IMR-90 (cell line): ENCODE measurements at regions of chr5 and their contacts with region 1.

Region 1: DNA sequence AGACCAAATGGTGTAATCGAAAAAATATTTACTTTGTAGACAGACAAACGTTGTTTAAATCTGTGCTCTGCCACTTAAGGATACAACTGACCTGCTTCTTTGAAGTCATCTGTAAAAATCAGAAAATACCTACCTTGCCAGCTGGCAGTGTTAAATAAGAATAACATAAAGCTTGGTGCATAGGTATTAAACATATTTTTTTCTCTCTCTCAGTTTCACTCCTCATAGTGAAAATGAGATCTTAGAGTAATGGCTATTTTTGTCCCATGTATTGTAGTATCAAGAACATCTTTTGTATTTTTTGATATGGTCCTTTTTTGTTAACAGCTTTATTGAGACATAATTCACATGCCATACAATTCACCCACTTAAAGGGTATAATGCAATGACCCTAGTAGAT is 17.9 kb upstream of the RANBP17 start:
- DNase-seq: no peak
- ATAC-seq: no peak
- H3K4me3 ChIP-seq: no peak overlapping the region
- H3K27ac ChIP-seq: no peak overlapping the region
- H3K4me1 ChIP-seq: peaks cover 2% of the 10 kb centered on the region; the same call in 1 of the 2 replicates
- H3K27me3 ChIP-seq: no peaks in the 10 kb centered on the region
- CTCF ChIP-seq: no peak
- POLR2A ChIP-seq: no peak
- RAD21 ChIP-seq: no peak

Region 2: DNA sequence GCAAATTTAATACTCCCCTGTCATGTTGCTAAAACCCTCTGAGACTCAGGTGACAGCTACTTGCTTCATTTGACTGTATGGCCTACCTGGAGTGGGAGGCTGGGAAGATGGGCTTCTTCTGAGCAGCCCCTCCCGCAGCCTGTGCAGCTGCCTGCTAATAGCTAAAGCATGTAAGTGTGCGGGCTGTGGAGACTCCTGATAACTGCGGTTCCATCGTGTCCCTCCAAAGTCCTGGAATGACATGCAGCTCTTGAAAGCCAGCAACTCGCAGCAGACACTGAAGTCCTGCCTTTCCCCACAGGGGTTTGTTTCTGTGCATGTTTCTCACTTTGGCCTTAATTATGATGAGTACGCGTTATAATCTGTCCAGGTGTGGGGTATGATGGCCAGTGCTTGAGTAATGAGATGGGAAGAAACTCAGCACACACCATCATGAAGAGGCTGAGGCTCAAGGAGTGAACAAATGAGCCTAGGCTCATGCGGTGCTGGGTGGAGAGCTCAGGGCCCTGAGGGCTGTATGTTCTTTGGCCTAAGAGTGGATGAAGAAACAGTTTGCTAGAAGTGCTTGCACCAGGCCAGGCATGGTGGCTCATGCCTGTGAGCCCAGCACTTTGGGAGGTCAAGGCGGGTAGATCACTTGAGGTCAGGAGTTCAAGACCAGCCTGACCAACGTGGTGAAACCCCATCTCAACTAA is 1087.7 kb before region 1 on chr5:
- CTCF ChIA-PET with region 1: no interaction called
- POLR2A ChIA-PET with region 1: interaction called, 11 read pairs
- dilution Hi-C with region 1: no loop called
- in situ Hi-C with region 1: no loop called
- intact Hi-C with region 1: no loop called
- DNase-seq: no peak
- ATAC-seq: no peak
- H3K4me3 ChIP-seq: no peak overlapping the region
- H3K27ac ChIP-seq: no peak overlapping the region
- H3K4me1 ChIP-seq: peaks cover 6% of the 10 kb centered on the region; the same call in 1 of the 2 replicates
- H3K27me3 ChIP-seq: no peaks in the 10 kb centered on the region
- CTCF ChIP-seq: no peak
- POLR2A ChIP-seq: no peak
- RAD21 ChIP-seq: no peak

Region 3: DNA sequence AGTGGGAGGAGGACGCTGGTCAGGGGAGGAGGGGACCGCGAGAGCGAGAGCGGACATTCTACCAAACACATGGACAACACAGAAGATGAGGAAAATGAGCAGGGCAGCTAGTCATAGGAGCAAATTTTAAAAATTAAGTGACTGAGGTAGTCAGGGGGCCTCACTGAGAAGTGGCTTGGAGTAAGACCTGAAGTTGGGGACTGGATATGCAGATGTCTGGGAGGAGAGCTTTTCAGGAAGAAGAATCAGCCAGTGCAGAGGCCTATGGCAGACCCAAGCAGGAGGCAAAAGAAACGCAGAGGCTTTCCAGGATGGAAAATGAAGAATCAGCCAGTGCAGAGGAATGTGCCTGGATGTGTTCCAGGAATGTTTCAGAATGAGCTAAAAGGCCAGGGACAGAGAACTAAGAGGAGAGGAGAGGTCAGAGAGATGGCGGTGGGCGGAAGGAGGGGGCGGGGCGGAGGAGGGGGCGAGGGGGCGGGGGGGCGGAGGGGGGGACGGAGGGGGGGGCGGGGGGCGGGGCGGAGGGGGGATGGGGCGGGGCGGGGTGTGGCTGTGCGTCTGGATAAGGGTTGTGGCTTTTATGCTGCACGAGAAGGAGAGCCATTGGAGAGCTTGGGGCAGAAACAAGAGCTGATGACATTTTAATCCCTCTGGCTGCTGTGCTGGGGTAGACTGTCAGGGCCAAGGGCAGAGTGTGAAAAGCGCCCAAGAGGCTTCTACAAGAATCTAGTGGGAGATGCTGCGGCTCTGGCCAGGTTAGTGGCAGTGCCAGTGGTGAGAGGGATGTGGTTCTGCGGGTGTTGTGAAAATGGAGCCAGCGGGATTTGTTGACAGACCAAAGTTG is 210.4 kb before region 1 on chr5:
- CTCF ChIA-PET with region 1: no interaction called
- POLR2A ChIA-PET with region 1: no interaction called
- dilution Hi-C with region 1: no loop called
- in situ Hi-C with region 1: no loop called
- intact Hi-C with region 1: no loop called
- DNase-seq: peak; percentile 65
- ATAC-seq: peak; percentile 75
- H3K4me3 ChIP-seq: peak overlapping the region; percentile 16; the same call in 1 of the 2 replicates
- H3K27ac ChIP-seq: no peak overlapping the region
- H3K4me1 ChIP-seq: peaks cover 4% of the 10 kb centered on the region; the same call in 1 of the 2 replicates
- H3K27me3 ChIP-seq: peaks cover 2% of the 10 kb centered on the region; the same call in 1 of the 2 replicates
- CTCF ChIP-seq: no peak
- POLR2A ChIP-seq: no peak
- RAD21 ChIP-seq: no peak

Region 4: GRCh38 chr5:170917113-170917512 is 73.2 kb after region 1 on chr5:
- CTCF ChIA-PET with region 1: no interaction called
- POLR2A ChIA-PET with region 1: no interaction called
- dilution Hi-C with region 1: no loop called
- in situ Hi-C with region 1: no loop called
- intact Hi-C with region 1: no loop called
- DNase-seq: no peak
- ATAC-seq: no peak
- H3K4me3 ChIP-seq: no peak overlapping the region
- H3K27ac ChIP-seq: no peak overlapping the region
- H3K4me1 ChIP-seq: peaks cover 6% of the 10 kb centered on the region
- H3K27me3 ChIP-seq: no peaks in the 10 kb centered on the region
- CTCF ChIP-seq: peak; percentile 42
- POLR2A ChIP-seq: no peak
- RAD21 ChIP-seq: peak; percentile 23